ENCODE measurements at regions of chr5 and their contacts with region 1.

Region 1: DNA sequence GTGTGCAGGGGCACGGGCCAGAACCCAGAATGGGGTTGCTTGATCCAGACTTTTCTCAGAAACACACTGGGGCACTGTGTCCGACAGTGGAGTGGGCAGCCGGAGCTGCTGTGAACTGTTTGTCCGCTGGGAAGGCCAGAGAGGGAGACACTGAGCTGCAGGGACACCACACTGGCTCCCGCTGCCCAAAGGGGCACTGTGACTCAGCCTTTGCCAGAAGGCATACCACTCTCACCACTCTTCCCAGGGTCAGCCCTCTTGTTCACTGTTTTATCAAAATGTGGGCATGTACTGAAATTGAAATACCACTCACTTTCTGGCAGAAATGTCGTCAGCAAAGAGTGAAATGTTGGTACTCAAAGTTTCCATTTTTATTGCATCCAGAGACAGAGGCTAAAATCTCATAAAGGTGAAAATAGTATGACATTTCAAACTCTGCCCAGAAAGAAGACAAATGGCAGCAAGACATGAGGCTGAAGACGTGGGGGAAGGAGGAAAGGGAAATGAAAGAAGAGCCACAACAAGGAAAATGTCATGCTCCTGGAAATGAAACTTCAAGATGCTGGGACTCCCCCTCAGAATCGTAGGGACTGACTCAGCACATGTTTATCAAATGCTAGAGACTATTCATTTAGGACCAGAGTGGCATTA is 4.5 kb upstream of the IL7R start:
- DNase-seq: no peak
- ATAC-seq: no peak
- H3K4me3 ChIP-seq: no peak overlapping the region
- H3K27ac ChIP-seq: no peak overlapping the region
- H3K4me1 ChIP-seq: peaks cover 0 to 10% of the 10 kb centered on the region in 2 donors
- H3K27me3 ChIP-seq: peaks cover 0 to 3% (median 0%) of the 10 kb centered on the region in 3 donors
- CTCF ChIP-seq: no peak
- POLR2A ChIP-seq: no peak

Region 2: DNA sequence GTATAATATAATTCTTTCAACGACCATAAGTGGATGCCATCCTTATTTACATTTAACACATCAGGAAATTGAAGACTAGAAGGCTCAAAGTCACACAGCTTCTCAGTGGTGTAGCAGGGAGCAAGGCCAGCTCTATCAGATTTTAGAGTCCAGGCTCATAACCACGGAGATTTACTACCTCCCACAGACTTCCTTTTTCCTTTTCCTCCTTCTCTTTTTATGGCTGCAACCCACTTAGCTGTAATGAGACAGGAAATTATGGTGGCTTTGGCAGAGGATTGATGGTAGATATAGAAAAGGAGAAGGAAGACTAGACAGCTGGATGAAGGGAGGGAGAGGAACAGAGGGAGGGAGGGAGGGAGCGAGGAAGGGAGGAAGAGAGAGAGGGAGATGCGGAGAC is 187.1 kb before region 1 on chr5:
- in situ Hi-C with region 1: no loop called
- intact Hi-C with region 1: no loop called
- DNase-seq: no peak
- ATAC-seq: no peak
- H3K4me3 ChIP-seq: no peak overlapping the region
- H3K27ac ChIP-seq: no peak overlapping the region
- H3K4me1 ChIP-seq: no peaks in the 10 kb centered on the region
- H3K27me3 ChIP-seq: no peaks in the 10 kb centered on the region
- CTCF ChIP-seq: no peak
- POLR2A ChIP-seq: no peak

Region 3: GRCh38 chr5:35698047-35698808 is 154.0 kb before region 1 on chr5:
- in situ Hi-C with region 1: no loop called
- intact Hi-C with region 1: no loop called
- DNase-seq: no peak
- ATAC-seq: no peak
- H3K4me3 ChIP-seq: no peak overlapping the region
- H3K27ac ChIP-seq: no peak overlapping the region
- H3K4me1 ChIP-seq: no peaks in the 10 kb centered on the region
- H3K27me3 ChIP-seq: no peaks in the 10 kb centered on the region
- CTCF ChIP-seq: no peak
- POLR2A ChIP-seq: no peak

Region 4: GRCh38 chr5:35785601-35786085 is 66.6 kb before region 1 on chr5:
- in situ Hi-C with region 1: no loop called
- intact Hi-C with region 1: loop called (anchors 5 kb)
- DNase-seq: no peak
- ATAC-seq: no peak
- H3K4me3 ChIP-seq: no peak overlapping the region
- H3K27ac ChIP-seq: no peak overlapping the region
- H3K4me1 ChIP-seq: no peaks in the 10 kb centered on the region
- H3K27me3 ChIP-seq: no peaks in the 10 kb centered on the region
- CTCF ChIP-seq: no peak
- POLR2A ChIP-seq: no peak